ENCODE measurements at regions of chr12 and their contacts with region 1.

Region 1: DNA sequence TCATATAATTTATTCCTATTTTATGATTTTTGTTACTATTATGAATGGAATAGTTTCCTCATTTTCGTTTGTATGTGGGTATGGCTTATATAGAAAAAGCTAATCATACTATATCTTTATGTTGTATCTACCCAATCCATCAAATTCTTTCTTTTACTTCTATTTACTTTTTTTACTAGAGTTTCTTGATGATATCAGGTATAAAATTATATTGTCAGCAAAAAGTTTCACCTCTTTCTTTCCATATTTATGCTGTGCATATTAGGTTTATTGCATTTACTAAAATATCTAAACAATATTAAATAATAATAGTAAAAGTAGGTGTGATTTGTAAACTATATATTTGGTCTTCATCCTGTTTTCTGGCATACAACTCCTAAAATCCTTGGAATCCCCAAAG is 146.7 kb upstream of the PLXNC1 start:
- DNase-seq: no peak
- ATAC-seq: no peak
- H3K4me3 ChIP-seq: no peak overlapping the region
- H3K4me3 Mint-ChIP-seq: no peak overlapping the region
- H3K27ac ChIP-seq: no peak overlapping the region
- H3K27ac Mint-ChIP-seq: no peak overlapping the region
- H3K4me1 ChIP-seq: no peaks in the 10 kb centered on the region
- H3K4me1 Mint-ChIP-seq: peaks cover 5 to 9% (median 5%) of the 10 kb centered on the region in 3 donors
- H3K27me3 ChIP-seq: no peaks in the 10 kb centered on the region
- H3K27me3 Mint-ChIP-seq: peaks cover 0 to 2% of the 10 kb centered on the region in 2 donors

Region 2: DNA sequence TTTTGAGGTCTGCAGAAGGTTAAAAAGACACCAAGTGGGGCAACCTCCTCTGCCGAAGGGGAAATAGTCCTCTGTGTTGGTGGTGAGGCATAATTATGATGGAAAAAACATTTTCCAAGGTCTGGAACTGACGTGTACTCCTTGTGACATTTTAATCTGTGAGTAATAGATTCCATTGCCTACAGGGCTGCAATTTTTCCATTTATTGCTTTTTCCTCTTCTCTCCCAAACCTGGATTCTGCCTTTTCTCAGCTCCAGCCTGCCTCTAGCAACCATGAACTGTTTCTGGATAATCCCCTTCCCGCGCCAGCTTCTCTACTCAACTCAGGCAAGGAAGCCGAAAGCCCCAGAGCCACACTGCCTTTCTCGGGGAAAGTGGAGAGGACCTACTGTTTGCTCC is 83.4 kb before region 1 on chr12:
- CTCF ChIA-PET with region 1: interaction called in 1 of 2 experiments, 10 read pairs
- POLR2A ChIA-PET with region 1: no interaction called
- DNase-seq: no peak
- ATAC-seq: no peak
- H3K4me3 ChIP-seq: no peak overlapping the region
- H3K4me3 Mint-ChIP-seq: no peak overlapping the region
- H3K27ac ChIP-seq: no peak overlapping the region
- H3K27ac Mint-ChIP-seq: no peak overlapping the region
- H3K4me1 ChIP-seq: no peaks in the 10 kb centered on the region
- H3K4me1 Mint-ChIP-seq: peaks cover 0 to 3% (median 0%) of the 10 kb centered on the region in 3 donors
- H3K27me3 ChIP-seq: no peaks in the 10 kb centered on the region
- H3K27me3 Mint-ChIP-seq: no peaks in the 10 kb centered on the region